Body of pancreas (tissue), 4 donors: ENCODE measurements at regions of chr5 and their contacts with region 1.

Region 1: DNA sequence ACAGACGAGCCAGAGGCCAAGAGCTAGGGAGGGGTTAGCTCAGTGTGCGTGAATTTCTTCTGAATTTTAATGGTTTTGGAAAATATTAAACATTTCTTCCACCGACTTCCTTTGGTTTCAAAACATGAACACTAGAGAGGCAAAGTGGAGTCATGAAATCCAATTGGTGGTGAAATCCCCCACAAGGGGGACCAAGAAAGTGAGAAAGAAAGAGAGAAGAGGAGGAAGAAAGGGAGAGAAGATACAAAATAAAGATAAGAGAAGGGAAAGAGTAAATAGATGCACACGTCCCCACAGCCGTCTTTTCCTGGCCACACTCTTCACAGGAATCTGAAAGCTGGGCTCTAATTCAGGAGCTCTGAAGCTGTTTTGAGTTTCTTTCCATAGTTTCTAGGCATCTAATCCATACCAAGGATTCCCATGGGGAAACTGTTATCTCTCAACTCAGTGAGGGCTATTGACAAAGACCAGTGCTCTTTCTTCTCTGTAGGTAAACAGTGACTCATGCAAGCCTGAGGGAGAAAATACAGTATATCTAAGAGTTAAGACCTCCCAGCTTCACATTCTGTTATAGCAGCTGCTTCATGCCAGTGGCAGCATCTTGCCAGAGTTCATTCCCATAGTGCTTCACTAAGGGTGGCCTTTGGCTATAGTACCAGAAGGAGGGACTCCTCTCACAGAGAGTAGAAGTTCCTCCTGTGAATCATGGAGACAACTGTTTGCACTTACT is 115.8 kb upstream of the LIFR start:
- DNase-seq: no peak
- ATAC-seq: no peak
- H3K4me3 ChIP-seq: no peak overlapping the region
- H3K27ac ChIP-seq: no peak overlapping the region
- H3K4me1 ChIP-seq: peaks cover 12% of the 10 kb centered on the region
- H3K27me3 ChIP-seq: no peaks in the 10 kb centered on the region
- CTCF ChIP-seq: no peak
- POLR2A ChIP-seq: no peak

Region 2: GRCh38 chr5:38441453-38442246 is 230.6 kb before region 1 on chr5:
- intact Hi-C with region 1: loop called (anchors 5 kb)
- DNase-seq: peak; percentile 92 to 95 (median 92)
- ATAC-seq: peak; percentile 97
- H3K4me3 ChIP-seq: no peak overlapping the region
- H3K27ac ChIP-seq: no peak overlapping the region
- H3K4me1 ChIP-seq: peaks cover 14% of the 10 kb centered on the region
- H3K27me3 ChIP-seq: no peaks in the 10 kb centered on the region
- CTCF ChIP-seq: peak; percentile 93 to 97 (median 97)
- POLR2A ChIP-seq: no peak